Activated CD4-positive, alpha-beta memory T cell treated with anti-CD3 and anti-CD28 coated beads for 36 hours (primary cell): ENCODE measurements at regions of chr1 and their contacts with region 1.

Region 1: DNA sequence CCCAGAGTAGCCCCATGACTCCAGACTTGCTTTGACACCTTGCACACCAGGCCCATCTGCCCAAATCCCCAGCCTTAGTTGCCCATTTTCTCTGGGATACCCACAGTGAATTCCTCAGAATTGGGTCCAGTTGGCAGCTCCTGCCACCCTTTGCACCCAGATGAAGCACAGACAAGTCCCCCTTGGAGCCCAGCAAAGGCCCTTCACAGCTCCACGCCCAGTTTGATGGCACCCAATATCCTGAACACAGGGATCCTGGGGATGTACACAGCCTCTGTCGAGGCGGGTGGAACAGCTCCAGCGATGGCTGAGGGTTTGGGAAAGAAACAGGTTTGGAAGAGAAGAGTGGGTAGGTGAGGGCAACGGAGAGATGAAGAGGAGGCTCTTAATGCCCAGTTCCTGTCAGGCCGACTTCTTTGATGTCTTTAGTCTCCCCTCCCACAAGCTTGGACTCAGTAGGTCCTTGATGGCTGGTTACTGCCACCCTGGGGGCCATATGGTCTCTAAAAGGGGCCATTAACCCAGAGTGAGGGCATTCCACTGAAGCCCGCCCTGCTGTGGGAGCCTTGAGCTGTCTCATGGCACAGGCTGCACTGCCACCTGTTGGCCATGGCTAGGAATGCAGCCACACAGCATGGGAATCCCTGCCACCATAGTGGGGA is 21.7 kb downstream of the TMEM53 start:
- DNase-seq: peak; percentile 83
- H3K4me3 Mint-ChIP-seq: no peak overlapping the region
- H3K27ac Mint-ChIP-seq: no peak overlapping the region
- H3K4me1 Mint-ChIP-seq: no peaks in the 10 kb centered on the region
- H3K27me3 Mint-ChIP-seq: no peaks in the 10 kb centered on the region

Region 2: DNA sequence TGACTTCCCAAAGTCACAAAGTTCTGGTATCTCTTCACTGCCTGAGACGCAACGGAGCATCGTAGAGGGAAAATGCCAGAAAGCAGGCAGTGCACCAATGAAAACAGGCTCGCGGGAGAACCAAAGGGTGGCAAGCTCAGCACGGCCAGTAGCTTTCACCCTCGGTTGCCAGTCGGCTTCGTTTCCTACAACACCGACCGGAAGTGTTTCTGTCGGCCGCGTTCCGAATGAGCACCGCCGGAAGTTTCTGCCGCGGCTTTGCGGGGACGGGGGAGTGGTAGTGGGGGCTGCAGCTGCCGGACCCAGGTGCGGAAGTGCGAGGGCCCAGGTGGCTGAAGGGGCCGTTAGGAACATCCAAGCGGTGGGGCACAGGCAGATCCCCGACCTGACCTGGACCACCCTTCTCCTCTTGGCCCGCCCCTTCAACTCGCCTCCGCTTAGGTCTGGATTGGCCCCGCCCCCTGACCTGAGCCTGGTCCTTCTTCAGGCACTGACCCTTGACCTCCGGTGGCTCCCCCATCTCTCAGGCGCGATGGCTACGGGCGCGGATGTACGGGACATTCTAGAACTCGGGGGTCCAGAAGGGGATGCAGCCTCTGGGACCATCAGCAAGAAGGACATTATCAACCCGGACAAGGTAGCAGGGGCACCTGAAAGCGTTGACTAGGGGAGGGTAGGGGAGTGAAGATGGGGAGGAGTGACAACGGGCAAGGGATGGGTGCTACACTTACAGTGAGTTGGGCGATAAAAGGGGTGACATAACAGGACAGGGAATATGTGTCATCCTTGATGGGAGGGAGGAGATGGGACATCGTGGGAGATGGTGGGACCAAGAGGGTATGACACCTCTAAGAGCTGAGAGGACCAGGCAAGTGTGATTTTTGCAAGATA is 439.1 kb before region 1 on chr1 and contains the start of gene DMAP1:
- CTCF ChIA-PET with region 1: interaction called, 11 read pairs
- POLR2A ChIA-PET with region 1: no interaction called
- intact Hi-C with region 1: no loop called
- DNase-seq: peak; percentile 91
- H3K4me3 Mint-ChIP-seq: peak within 1 kb of the TSS; percentile 92
- H3K27ac Mint-ChIP-seq: peak within 1 kb of the TSS; percentile 90
- H3K4me1 Mint-ChIP-seq: peaks cover 33% of the 10 kb centered on the region
- H3K27me3 Mint-ChIP-seq: no peaks in the 10 kb centered on the region
- total RNA-seq, gene DMAP1: 31.1 to 32.8 TPM

Region 3: DNA sequence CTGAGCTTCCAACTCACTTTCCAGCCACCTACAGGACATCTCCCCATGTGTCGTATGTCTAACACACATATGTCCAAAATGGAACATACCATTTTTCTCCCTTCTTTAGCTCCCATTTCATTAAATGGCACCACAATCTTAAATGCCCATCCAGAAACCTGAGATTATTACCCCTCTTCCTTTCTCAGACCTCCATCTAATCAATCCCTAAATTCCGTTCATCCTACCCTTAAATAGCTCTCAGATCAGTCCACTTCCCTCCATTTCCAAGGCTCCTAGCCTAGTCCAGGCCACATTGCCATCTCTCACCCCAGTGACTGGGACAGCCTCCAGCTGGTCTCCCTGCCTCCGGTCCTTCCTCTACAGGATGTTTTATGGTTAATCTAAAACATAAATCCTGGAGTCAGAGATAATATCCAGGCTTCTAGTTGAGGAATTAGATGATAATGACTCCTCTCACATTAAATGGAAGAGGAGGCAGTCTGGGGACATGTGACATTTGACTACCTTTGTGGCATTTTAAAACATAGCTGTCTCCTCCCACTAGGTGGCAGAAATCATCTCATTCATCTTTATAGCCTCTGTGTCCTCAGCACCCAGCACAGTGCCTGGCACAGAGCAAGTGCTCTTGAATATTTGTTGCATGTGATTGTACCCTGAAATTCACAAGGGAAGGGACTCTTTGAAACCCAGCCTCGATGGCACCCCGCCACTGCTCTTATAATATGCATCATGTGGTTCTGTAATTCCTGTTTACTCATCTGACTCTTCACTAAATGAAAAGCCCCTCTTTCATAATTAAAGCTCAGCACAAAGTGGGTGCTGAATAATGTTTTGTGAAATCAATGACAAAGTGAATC is 80.6 kb before region 1 on chr1:
- CTCF ChIA-PET with region 1: interaction called, 63 read pairs
- POLR2A ChIA-PET with region 1: no interaction called
- intact Hi-C with region 1: no loop called
- DNase-seq: peak; percentile 15
- H3K4me3 Mint-ChIP-seq: no peak overlapping the region
- H3K27ac Mint-ChIP-seq: no peak overlapping the region
- H3K4me1 Mint-ChIP-seq: no peaks in the 10 kb centered on the region
- H3K27me3 Mint-ChIP-seq: peaks cover 9% of the 10 kb centered on the region

Region 4: GRCh38 chr1:44609412-44609767 is 43.2 kb before region 1 on chr1:
- CTCF ChIA-PET with region 1: interaction called, 47 read pairs
- POLR2A ChIA-PET with region 1: no interaction called
- intact Hi-C with region 1: loop called (anchors 2 kb)
- DNase-seq: peak; percentile 45
- H3K4me3 Mint-ChIP-seq: no peak overlapping the region
- H3K27ac Mint-ChIP-seq: no peak overlapping the region
- H3K4me1 Mint-ChIP-seq: no peaks in the 10 kb centered on the region
- H3K27me3 Mint-ChIP-seq: no peaks in the 10 kb centered on the region

Region 5: DNA sequence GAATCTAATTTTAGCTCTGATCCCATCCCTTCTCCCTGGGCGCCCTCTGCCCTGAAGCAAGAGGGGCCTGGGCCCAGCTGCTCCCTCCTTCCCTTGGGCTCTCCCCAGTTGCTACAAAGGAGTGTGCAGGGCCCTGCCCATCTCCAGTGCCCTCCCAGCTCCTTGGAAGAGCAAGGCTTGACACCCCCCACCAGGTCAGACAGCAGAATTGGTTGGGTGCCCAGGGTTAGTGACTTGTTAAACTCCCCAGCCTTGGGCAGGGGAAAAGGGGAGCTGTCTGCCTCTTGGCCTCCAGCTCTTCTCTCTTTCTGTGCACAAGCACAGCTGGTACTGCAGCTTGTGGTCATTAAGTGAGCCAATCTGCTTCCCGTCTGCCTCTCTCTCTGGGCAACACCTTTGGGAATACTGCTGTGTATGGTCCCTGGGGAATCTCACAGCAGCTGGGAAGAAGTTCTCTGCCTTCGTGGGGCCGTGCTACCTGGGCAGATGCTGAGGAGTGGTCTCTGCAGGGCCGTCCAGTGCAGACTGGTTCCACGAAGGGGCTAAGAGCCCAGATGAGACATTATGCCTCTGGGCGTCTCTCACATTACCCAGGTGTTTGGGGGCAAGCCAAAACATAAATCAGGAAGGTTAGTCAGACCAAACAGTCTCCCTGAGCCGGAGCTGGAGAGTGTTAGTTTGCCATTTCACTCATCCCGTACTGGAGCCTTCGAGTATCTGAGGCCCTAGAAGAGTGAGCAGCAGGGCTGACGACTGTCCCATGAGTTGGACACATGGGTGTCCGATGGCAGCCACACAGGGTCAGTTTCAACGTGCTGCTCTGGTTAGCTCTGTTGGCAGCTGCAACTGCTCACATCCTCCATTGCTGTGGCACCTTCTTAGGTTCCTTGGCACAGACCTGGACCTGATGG is 15.6 kb before region 1 on chr1:
- CTCF ChIA-PET with region 1: interaction called, 66 read pairs
- POLR2A ChIA-PET with region 1: interaction called, 28 read pairs
- intact Hi-C with region 1: no loop called
- DNase-seq: no peak
- H3K4me3 Mint-ChIP-seq: no peak overlapping the region
- H3K27ac Mint-ChIP-seq: peak overlapping the region; percentile 28
- H3K4me1 Mint-ChIP-seq: peaks cover 26% of the 10 kb centered on the region
- H3K27me3 Mint-ChIP-seq: no peaks in the 10 kb centered on the region

Region 6: DNA sequence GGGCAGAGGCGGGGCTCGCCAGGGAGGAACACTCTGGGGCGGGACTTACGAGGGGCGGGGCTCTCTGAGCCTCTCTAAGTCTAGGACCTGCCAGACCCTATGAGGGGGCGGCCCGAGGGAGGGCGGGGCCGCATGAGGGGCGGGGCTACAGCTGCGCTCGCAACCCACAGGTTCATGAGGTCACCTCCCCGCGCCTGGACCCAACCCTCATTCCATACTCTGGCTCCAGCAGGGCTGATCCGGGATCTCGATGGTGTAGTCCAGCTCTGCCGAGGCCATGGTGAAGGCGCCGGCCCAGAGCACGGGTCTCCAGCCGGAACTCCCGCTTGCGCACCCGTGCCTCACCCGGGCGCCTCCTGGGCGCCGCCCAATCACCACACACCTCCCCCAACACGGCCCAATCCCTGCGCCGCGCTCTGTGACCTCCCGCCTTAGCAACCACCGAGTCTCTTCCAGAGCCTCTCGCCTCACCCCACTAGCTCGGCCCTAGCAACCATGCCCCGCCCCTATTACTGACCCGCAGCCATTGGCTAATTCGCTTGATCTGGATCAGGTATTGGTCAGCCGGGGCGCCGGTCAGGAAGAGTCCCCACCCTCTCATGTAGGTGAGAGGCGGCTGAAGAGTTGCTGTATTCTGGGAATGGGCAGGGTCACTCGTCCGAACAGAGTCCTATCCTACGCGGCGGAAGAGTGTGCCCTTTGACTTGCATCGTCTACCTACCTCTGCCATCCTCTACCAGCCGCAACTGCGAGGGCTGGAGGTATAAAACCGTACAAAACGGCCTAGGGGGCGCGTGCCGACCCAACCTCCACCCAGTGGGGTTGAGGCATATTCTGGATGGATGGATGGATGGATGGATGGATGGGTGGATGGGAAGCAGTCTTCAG is 21.8 kb after region 1 on chr1 and contains the starts of genes ARMH1 and TMEM53:
- CTCF ChIA-PET with region 1: interaction called, 43 read pairs
- POLR2A ChIA-PET with region 1: no interaction called
- intact Hi-C with region 1: no loop called
- DNase-seq: peak; percentile 99
- H3K4me3 Mint-ChIP-seq: peak within 1 kb of the TSS; percentile 83
- H3K27ac Mint-ChIP-seq: peak within 1 kb of the TSS; percentile 88
- H3K4me1 Mint-ChIP-seq: peaks cover 23% of the 10 kb centered on the region
- H3K27me3 Mint-ChIP-seq: no peaks in the 10 kb centered on the region
- total RNA-seq, gene ARMH1: 134 to 141 TPM
- total RNA-seq, gene TMEM53: 5.1 to 6.5 TPM

Region 7: DNA sequence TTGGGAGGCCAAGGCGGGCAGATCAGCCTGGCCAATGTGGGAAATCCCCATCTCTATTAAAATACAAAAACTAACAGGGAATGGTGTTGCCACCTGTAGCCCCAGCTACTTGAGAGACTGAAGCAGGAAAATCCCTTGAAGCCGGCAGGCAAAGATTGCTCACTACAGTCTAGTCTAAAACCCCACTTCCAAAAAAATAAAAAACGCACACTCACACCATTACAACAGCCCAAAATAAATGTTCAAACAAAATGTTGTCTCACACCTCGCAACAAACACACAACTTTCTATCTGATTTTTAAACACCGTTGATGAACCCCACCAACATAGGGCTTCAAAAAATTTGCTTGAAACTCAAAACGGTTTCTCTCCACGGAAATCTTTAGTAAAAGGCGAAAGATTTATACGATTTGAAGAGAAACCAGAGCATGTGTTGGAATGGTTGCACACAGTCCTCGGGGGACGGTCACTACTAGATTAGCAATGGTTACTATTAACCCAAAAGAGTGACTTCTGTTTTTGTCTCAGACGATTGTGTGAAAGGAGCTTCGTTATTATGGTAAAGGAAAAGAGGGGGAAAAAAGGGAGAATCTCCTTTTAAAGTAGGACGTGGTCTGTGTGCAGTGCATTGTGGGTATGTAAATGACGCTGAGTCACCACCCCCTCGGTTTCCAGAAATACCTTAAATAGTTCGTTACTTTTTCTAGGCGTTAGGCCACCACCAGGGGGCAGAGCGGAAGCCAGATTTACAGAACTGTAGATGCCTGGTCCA is 78.4 kb after region 1 on chr1 and contains the start of gene RNU5D-1:
- CTCF ChIA-PET with region 1: no interaction called
- POLR2A ChIA-PET with region 1: no interaction called
- intact Hi-C with region 1: no loop called
- DNase-seq: peak; percentile 96
- H3K4me3 Mint-ChIP-seq: peak within 1 kb of the TSS; percentile 69
- H3K27ac Mint-ChIP-seq: peak within 1 kb of the TSS; percentile 100
- H3K4me1 Mint-ChIP-seq: peaks cover 37% of the 10 kb centered on the region
- H3K27me3 Mint-ChIP-seq: peaks cover 3% of the 10 kb centered on the region
- total RNA-seq, gene RNU5D-1: not detected